HepG2 (cell line): ENCODE measurements at regions of chr9 and their contacts with region 1.

Region 1: GRCh38 chr9:108953983-108954574 is 19.9 kb downstream of the ABITRAM start:
- DNase-seq: peak; percentile 61
- ATAC-seq: no peak
- H3K4me3 ChIP-seq: no peak overlapping the region
- H3K27ac ChIP-seq: no peak overlapping the region
- H3K4me1 ChIP-seq: no peaks in the 10 kb centered on the region
- H3K27me3 ChIP-seq: no peaks in the 10 kb centered on the region
- CTCF ChIP-seq: peak; percentile 68
- EP300 ChIP-seq: no peak
- POLR2A ChIP-seq: no peak
- RAD21 ChIP-seq: peak; percentile 41; the same call in 1 of the 2 replicates

Region 2: GRCh38 chr9:108850293-108850897 is 103.7 kb before region 1 on chr9:
- CTCF ChIA-PET with region 1: interaction called, 8 read pairs
- POLR2A ChIA-PET with region 1: no interaction called
- in situ Hi-C with region 1: no loop called
- intact Hi-C with region 1: loop called (anchors 1 kb)
- DNase-seq: peak; percentile 44
- ATAC-seq: peak; percentile 62
- H3K4me3 ChIP-seq: no peak overlapping the region
- H3K27ac ChIP-seq: no peak overlapping the region
- H3K4me1 ChIP-seq: peaks cover 64% of the 10 kb centered on the region
- H3K27me3 ChIP-seq: no peaks in the 10 kb centered on the region
- CTCF ChIP-seq: peak; percentile 75
- EP300 ChIP-seq: no peak
- POLR2A ChIP-seq: no peak
- RAD21 ChIP-seq: no peak; the same call in 1 of the 2 replicates

Region 3: DNA sequence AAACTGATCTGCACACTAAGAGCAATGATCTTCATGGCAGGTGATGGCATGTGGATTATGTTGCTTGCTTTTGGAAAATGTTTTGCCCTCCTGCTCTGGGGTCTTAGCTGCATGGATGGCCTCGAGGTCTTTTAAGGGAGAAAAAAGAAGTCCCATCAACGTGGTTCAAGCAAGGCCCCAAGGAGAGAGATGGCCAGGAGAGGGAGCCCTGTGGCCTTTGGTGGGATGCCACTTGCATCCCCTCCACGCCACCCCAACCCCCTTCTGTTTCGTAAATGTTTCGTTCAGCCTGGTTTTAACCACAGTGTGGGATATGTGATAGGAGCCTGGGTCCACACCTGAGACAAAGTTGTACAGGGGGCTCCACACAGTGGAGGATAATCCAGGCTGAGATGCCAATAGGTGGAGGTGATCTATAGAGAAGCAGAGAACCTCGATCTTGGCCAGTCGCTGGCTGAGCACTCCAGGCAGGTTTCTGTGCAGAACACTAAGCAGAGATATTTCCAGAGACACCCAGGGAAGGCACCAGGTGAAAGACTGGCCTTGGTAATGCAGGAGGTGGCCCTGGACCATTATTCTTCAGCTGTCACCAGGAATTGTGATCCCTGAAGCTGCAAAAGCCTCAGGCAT is 238.8 kb after region 1 on chr9:
- CTCF ChIA-PET with region 1: no interaction called
- POLR2A ChIA-PET with region 1: no interaction called
- in situ Hi-C with region 1: no loop called
- intact Hi-C with region 1: no loop called
- DNase-seq: peak; percentile 49
- ATAC-seq: peak; percentile 92
- H3K4me3 ChIP-seq: no peak overlapping the region
- H3K27ac ChIP-seq: no peak overlapping the region
- H3K4me1 ChIP-seq: 0 out of 2 replicates have a peak, but pooled peaks cover 9% of the 10 kb centered on the region
- H3K27me3 ChIP-seq: peaks cover 0 to 1% of the 10 kb centered on the region in 2 experiments; a peak in 1 of 5 replicates
- CTCF ChIP-seq: peak; percentile 80
- EP300 ChIP-seq: no peak
- POLR2A ChIP-seq: no peak
- RAD21 ChIP-seq: peak; percentile 80